Activated B cell treated with CpG ODN at 0.5 μM for 24 hours (primary cell): ENCODE measurements at regions of chr20 and their contacts with region 1.

Region 1: GRCh38 chr20:5191829-5192569 is 65.2 kb downstream of the CDS2 start:
- DNase-seq: no peak
- ATAC-seq: peak; percentile 78
- H3K4me3 Mint-ChIP-seq: no peak overlapping the region
- H3K27ac Mint-ChIP-seq: peak overlapping the region; percentile 77
- H3K4me1 Mint-ChIP-seq: peaks cover 8% of the 10 kb centered on the region
- H3K27me3 Mint-ChIP-seq: no peaks in the 10 kb centered on the region
- CTCF ChIP-seq: no peak

Region 2: DNA sequence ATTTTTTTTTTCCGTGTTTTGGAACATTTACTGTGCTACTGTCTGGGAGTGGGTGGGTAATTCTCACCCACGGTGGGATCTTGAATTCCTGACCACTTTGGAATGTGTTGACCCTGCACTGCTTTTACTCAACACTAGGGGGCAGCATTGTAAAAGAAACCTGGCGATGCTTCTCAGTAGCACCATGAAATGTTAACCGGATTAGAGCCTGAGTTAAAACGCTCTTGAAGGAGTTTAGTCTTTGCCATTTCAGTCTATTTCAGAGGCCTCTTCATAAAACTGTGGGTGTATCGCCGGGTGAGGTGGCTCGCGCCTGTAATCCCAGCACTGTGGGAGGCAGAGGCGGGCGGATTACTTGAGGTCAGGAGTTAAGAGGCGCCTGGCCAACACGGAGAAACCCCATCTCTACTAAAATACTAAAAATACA is 584.7 kb before region 1 on chr20:
- CTCF ChIA-PET with region 1: no interaction called
- POLR2A ChIA-PET with region 1: no interaction called
- intact Hi-C with region 1: loop called (anchors 1 kb)
- DNase-seq: peak; percentile 31
- ATAC-seq: peak; percentile 93
- H3K4me3 Mint-ChIP-seq: no peak overlapping the region
- H3K27ac Mint-ChIP-seq: peak overlapping the region; percentile 13
- H3K4me1 Mint-ChIP-seq: peaks cover 9% of the 10 kb centered on the region
- H3K27me3 Mint-ChIP-seq: peaks cover 3% of the 10 kb centered on the region
- CTCF ChIP-seq: peak; percentile 96

Region 3: GRCh38 chr20:4740774-4741431 is 451.1 kb before region 1 on chr20:
- CTCF ChIA-PET with region 1: no interaction called
- POLR2A ChIA-PET with region 1: no interaction called
- intact Hi-C with region 1: loop called (anchors 1 kb)
- DNase-seq: peak; percentile 48
- ATAC-seq: peak; percentile 58
- H3K4me3 Mint-ChIP-seq: no peak overlapping the region
- H3K27ac Mint-ChIP-seq: no peak overlapping the region
- H3K4me1 Mint-ChIP-seq: no peaks in the 10 kb centered on the region
- H3K27me3 Mint-ChIP-seq: peaks cover 3% of the 10 kb centered on the region
- CTCF ChIP-seq: peak; percentile 84

Region 4: DNA sequence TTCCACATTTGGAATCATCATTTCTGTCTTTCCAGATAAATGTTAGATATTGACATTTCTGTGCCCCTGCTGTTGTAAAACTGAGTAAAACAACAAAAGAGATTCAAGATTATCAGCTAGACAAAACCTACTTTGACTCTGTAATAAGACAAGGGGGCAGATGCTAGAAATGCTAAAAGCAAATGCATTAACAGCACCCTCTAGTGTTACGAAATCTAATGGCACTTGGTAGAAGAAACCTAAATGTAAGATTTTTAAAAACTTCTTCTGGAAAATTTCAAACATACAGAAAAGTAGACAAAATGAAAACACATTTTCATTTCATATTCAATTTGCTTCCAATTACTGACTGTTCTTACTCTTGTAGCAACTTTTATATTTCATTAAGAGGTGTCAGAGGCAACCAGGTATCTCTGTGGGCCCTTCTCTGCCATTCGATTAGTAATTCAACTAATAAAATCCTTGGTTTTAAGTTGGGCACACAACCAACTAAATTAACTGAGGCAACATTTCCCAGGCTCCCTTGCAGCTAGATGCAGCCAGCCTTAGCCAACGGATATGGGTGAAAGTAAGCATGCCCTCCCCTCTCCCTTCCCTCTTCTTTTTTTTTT is 235.7 kb before region 1 on chr20:
- CTCF ChIA-PET with region 1: interaction called, 6 read pairs
- POLR2A ChIA-PET with region 1: no interaction called
- intact Hi-C with region 1: loop called (anchors 1 kb)
- DNase-seq: no peak
- ATAC-seq: no peak
- H3K4me3 Mint-ChIP-seq: no peak overlapping the region
- H3K27ac Mint-ChIP-seq: peak overlapping the region; percentile 18
- H3K4me1 Mint-ChIP-seq: peaks cover 34% of the 10 kb centered on the region
- H3K27me3 Mint-ChIP-seq: no peaks in the 10 kb centered on the region
- CTCF ChIP-seq: peak; percentile 19

Region 5: DNA sequence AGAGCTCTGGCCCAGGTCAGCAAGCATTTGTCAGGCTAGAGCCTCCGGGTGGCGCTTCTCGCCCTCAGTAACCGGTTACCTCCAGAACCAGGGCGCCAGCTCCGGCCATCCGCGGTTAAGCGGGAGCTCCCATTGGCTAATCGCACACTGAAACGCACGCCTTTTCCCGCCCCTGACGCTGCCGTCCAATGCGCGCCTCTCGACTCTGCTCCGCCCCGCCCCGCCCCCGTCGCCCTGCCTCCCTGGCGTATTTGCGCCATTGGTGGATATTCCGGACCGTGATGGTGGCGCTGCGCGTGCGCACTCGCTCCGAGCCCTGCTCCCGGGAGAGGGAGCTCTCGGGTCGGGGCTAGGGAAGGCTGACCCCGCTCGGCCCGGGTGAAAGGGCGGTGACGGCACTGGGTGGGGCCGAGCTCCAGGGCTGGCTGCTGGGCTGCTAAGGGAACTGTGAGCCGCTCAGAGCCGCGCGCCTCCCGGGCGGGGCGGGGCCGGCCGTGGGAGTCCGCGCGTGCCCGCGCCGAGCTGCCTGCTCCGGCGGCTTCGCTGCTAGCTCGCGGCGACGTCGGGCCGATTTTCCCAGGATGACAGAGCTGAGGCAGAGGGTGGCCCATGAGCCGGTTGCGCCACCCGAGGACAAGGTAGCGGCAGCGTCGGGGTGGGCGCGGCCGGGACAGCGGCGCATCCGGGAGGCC is 65.3 kb before region 1 on chr20 and contains the start of gene CDS2:
- CTCF ChIA-PET with region 1: interaction called, 106 read pairs
- POLR2A ChIA-PET with region 1: interaction called, 30 read pairs
- intact Hi-C with region 1: loop called (anchors 1 kb)
- DNase-seq: peak; percentile 99
- ATAC-seq: peak; percentile 87
- H3K4me3 Mint-ChIP-seq: peak within 1 kb of the TSS; percentile 87
- H3K27ac Mint-ChIP-seq: peak within 1 kb of the TSS; percentile 90
- H3K4me1 Mint-ChIP-seq: peaks cover 33% of the 10 kb centered on the region
- H3K27me3 Mint-ChIP-seq: no peaks in the 10 kb centered on the region
- CTCF ChIP-seq: no peak
- total RNA-seq, gene CDS2: 32.4 and 37.4 TPM in 2 replicates

Region 6: GRCh38 chr20:5168651-5169396 is 23.2 kb before region 1 on chr20:
- CTCF ChIA-PET with region 1: interaction called, 12 read pairs
- POLR2A ChIA-PET with region 1: no interaction called
- intact Hi-C with region 1: no loop called
- DNase-seq: no peak
- ATAC-seq: peak; percentile 64
- H3K4me3 Mint-ChIP-seq: peak overlapping the region; percentile 60
- H3K27ac Mint-ChIP-seq: peak overlapping the region; percentile 59
- H3K4me1 Mint-ChIP-seq: peaks cover 87% of the 10 kb centered on the region
- H3K27me3 Mint-ChIP-seq: no peaks in the 10 kb centered on the region
- CTCF ChIP-seq: no peak

Region 7: DNA sequence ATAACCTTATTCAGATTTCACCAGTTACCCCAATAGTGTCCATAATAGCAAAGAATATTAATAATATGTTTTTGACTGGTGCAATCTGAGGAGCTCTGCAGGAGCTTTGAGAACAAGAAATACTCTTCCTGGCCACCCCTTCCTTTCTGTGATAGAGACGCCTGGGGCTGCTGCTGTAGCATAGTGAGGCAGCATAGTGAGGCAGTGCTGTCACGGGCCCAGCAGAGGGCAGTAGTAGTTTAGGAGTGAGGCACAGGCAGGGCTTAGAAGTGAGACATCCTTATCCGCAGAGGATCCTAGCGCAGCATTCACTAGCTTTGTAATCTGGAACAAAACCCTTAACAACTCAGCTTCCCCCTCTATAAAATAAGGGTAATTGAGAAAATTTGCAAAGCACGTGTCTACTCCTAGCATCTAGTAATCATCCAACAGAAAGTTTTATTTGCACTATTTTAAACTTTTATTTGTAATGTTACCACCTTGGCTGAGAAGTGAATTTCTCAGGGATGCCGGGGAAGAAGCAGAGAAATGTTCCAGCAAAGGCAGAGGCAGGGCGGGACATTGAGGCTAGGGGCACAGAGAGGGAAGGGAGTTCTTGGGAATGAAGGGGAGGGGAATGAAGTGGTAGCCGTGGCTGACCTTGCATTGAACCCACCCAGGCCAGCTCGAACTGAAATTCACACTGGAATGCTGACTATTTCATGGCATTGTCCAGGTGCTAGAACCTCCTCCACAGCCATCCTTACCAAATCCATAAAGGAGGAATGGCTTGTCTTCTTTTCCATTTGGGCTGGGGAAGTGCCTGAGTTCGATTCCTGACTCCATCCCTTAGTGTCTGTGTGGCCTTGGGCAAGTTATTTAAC is 13.6 kb after region 1 on chr20:
- CTCF ChIA-PET with region 1: interaction called, 16 read pairs
- POLR2A ChIA-PET with region 1: no interaction called
- intact Hi-C with region 1: no loop called
- DNase-seq: no peak
- ATAC-seq: peak; percentile 97
- H3K4me3 Mint-ChIP-seq: no peak overlapping the region
- H3K27ac Mint-ChIP-seq: no peak overlapping the region
- H3K4me1 Mint-ChIP-seq: no peaks in the 10 kb centered on the region
- H3K27me3 Mint-ChIP-seq: no peaks in the 10 kb centered on the region
- CTCF ChIP-seq: peak; percentile 79

Region 8: GRCh38 chr20:5234158-5234557 is 42.2 kb after region 1 on chr20:
- CTCF ChIA-PET with region 1: no interaction called
- POLR2A ChIA-PET with region 1: no interaction called
- intact Hi-C with region 1: no loop called
- DNase-seq: no peak
- ATAC-seq: no peak
- H3K4me3 Mint-ChIP-seq: no peak overlapping the region
- H3K27ac Mint-ChIP-seq: no peak overlapping the region
- H3K4me1 Mint-ChIP-seq: no peaks in the 10 kb centered on the region
- H3K27me3 Mint-ChIP-seq: peaks cover 25% of the 10 kb centered on the region
- CTCF ChIP-seq: no peak